ENCODE measurements at regions of chr2 and their contacts with region 1.

Region 1: DNA sequence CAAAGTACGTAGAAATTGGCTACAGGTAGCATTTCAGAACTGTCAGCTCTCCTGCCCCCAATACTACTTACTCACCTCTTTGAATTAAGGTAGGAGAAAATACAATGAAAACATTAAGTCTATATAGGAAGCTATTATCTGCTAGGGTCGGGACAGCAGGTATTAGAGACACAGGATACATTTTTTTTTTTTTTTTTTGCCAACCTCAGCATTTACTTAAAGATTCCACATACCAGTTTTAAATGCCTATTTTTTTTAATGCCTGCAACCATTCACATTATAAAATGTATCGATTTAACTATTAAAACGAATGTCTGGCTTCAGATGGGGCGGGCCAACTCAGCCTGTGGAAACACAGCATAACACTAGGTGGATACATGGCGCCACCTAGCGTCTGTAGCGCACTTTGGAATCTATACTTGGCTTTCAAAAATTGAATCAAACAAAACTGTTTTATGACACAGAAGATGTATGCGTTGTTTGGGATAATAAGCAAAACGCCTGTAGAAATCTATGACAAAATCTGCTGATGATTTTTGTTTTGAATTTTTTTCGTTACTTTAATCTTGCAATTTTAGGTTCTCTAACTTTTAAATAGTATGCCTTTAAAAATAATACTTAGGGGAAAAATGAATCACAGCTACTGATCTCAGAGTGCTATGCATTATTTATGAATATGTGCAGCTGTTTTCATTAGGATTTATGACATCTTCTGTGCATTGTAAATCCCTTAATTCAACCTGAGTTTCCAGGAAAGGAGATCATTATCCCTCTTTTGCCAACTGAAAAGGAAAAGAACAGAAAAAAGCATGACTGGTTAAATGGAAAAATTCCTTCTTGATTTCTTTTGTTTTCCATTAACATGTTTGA is 261.0 kb downstream of the NYAP2 start:
- DNase-seq: peak; percentile 63 to 82
- H3K4me3 ChIP-seq: no peak overlapping the region
- H3K4me1 ChIP-seq: no peaks in the 10 kb centered on the region
- H3K27me3 ChIP-seq: no peaks in the 10 kb centered on the region

Region 2: GRCh38 chr2:225122583-225123486 is 537.7 kb before region 1 on chr2:
- in situ Hi-C with region 1: loop called (anchors 25 kb)
- DNase-seq: peak in 1 of 2 experiments; percentile 40
- H3K4me3 ChIP-seq: no peak overlapping the region
- H3K4me1 ChIP-seq: no peaks in the 10 kb centered on the region
- H3K27me3 ChIP-seq: no peaks in the 10 kb centered on the region

Region 3: GRCh38 chr2:226791487-226792081 is 1131.1 kb after region 1 on chr2:
- in situ Hi-C with region 1: loop called (anchors 25 kb)
- DNase-seq: peak; percentile 82 to 92
- H3K4me3 ChIP-seq: peak overlapping the region; percentile 35
- H3K4me1 ChIP-seq: peaks cover 4% of the 10 kb centered on the region
- H3K27me3 ChIP-seq: no peaks in the 10 kb centered on the region

Region 4: DNA sequence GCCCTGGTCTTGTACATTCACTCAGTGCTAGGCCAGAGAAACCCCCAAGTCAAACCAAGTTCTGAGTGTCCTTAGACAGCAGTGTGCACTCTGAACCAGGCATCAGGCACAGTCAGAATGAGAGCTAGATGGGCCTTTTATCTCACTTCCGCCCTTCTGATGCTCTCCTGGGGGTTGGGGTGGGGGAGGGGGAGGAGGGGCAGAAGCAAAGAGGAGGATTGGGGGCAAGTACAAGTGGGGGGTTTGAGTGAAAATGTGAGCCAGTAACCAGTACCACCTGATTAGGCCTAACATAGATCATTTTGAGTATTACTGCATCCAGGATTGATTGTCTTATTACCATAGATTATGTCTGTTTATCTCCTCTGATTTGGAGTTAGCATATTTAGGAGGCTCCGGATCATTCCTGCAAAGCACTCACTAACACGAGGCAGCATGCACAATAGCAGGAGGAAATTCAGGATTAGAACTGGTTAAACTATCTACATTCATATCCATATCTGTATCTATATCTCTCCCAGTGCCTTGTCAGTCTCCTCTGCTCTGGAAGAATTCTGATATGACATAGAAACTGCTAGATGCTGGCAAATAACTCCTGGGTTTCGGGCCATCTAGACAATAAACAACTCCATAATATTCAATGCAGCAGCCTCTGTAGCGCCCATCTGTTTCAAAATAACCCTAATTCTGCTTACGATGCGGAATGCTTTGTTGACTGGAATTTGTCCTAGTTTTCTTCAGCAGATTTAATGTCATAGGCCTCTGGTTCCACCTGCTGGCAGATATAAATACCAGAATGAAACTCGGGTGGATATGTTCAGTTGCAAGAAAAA is 1324.5 kb after region 1 on chr2:
- in situ Hi-C with region 1: loop called (anchors 10 kb)
- DNase-seq: peak; percentile 56 to 63
- H3K4me3 ChIP-seq: no peak overlapping the region
- H3K4me1 ChIP-seq: no peaks in the 10 kb centered on the region
- H3K27me3 ChIP-seq: peaks cover 5% of the 10 kb centered on the region; the same call in 1 of the 2 replicates

Measured in HAP-1 (cell line).